Mammary epithelial cell (primary cell): ENCODE measurements at regions of chrX and their contacts with region 1.

Region 1: GRCh38 chrX:5549512-5549911 is 679.2 kb downstream of the NLGN4X start:
- DNase-seq: no peak
- H3K4me3 ChIP-seq: no peak overlapping the region
- H3K27ac ChIP-seq: no peak overlapping the region
- H3K4me1 ChIP-seq: no peaks in the 10 kb centered on the region
- H3K27me3 ChIP-seq: no peaks in the 10 kb centered on the region
- CTCF ChIP-seq: no peak

Region 2: DNA sequence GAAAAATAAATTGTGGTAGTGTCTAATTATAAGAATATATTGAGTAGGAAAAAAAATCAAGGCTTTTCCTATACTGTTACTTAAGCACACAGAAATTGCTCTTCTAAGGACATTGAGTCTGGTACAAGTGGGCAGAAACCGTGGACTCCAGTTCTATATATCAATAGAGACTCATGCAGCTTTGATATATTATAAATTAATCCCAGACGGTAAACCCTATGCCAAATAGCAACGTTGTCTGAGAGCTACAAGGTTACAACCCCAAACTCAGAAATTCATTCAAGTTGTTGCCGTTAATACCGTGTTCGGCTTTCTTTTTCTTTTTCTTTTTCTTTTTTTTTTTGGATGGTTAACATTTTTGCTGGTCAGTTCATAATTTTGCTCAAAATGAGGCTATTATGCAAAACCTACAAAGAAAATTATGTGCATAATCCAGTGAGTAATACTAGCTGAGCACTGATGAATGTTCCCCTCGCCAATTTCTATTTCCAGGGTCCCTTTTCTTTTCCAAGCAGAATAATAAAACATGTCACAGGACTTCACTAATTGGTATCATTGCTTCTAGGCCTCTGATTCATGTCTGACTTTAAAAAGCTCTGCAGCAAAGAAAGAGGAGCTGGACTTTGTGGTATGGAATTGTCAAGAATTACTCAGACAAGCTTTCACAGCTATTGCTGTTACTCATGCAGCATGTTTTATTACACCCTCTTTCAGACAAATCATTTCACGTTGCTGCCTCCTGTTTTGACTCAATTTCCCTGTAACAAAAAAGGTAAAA is 58.5 kb before region 1 on chrX:
- CTCF ChIA-PET with region 1: no interaction called
- dilution Hi-C with region 1: loop called (anchors 5 kb)
- in situ Hi-C with region 1: no loop called
- intact Hi-C with region 1: no loop called
- DNase-seq: peak; percentile 3
- H3K4me3 ChIP-seq: no peak overlapping the region
- H3K27ac ChIP-seq: no peak overlapping the region
- H3K4me1 ChIP-seq: no peaks in the 10 kb centered on the region
- H3K27me3 ChIP-seq: no peaks in the 10 kb centered on the region
- CTCF ChIP-seq: no peak

Region 3: DNA sequence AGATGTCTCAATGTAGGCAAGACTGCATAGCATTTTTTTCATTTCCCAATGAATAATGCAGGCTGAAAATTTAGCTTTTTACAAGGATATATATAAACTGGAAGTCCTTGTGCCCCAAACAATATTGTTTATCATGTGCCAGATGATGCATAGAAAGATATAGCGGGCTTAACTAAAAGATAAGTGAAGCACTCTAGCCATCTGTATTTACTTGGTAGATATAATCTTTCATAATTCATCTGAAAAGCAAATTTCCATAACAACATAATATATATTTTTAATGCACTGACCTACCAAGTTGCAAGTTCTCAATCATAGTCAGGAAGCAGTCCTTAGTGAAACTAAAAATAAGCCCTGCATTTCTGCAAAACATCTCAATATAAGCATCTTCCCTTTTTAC is 25.9 kb after region 1 on chrX:
- CTCF ChIA-PET with region 1: no interaction called
- dilution Hi-C with region 1: no loop called
- in situ Hi-C with region 1: no loop called
- intact Hi-C with region 1: no loop called
- DNase-seq: no peak
- H3K4me3 ChIP-seq: no peak overlapping the region
- H3K27ac ChIP-seq: no peak overlapping the region
- H3K4me1 ChIP-seq: no peaks in the 10 kb centered on the region
- H3K27me3 ChIP-seq: no peaks in the 10 kb centered on the region
- CTCF ChIP-seq: no peak

Region 4: GRCh38 chrX:5617666-5618065 is 68.2 kb after region 1 on chrX:
- CTCF ChIA-PET with region 1: no interaction called
- dilution Hi-C with region 1: loop called (anchors 5 kb)
- in situ Hi-C with region 1: no loop called
- intact Hi-C with region 1: no loop called
- DNase-seq: no peak
- H3K4me3 ChIP-seq: no peak overlapping the region
- H3K27ac ChIP-seq: no peak overlapping the region
- H3K4me1 ChIP-seq: no peaks in the 10 kb centered on the region
- H3K27me3 ChIP-seq: no peaks in the 10 kb centered on the region
- CTCF ChIP-seq: no peak